Activated T-helper 1 cell treated with anti-CD3 and anti-CD28 coated beads, Interleukin-12 subunit alpha, Interleukin-12 subunit beta, Interleukin-2, Interleukin-4 antibody, amounts not matched to agents 30 ng/mL and 10 ng/mL and 1 ng/mL, durations not matched to agents 14 hours and 24 hours and 36 hours (primary cell): ENCODE measurements at regions of chr10 and their contacts with region 1.

Region 1: GRCh38 chr10:71396084-71396720 is 518 bp upstream of the CDH23 start:
- DNase-seq: no peak
- H3K4me3 Mint-ChIP-seq: peak overlapping the region; percentile 62
- H3K27ac Mint-ChIP-seq: no peak overlapping the region
- H3K4me1 Mint-ChIP-seq: no peaks in the 10 kb centered on the region
- H3K27me3 Mint-ChIP-seq: peaks cover 53% of the 10 kb centered on the region

Region 2: DNA sequence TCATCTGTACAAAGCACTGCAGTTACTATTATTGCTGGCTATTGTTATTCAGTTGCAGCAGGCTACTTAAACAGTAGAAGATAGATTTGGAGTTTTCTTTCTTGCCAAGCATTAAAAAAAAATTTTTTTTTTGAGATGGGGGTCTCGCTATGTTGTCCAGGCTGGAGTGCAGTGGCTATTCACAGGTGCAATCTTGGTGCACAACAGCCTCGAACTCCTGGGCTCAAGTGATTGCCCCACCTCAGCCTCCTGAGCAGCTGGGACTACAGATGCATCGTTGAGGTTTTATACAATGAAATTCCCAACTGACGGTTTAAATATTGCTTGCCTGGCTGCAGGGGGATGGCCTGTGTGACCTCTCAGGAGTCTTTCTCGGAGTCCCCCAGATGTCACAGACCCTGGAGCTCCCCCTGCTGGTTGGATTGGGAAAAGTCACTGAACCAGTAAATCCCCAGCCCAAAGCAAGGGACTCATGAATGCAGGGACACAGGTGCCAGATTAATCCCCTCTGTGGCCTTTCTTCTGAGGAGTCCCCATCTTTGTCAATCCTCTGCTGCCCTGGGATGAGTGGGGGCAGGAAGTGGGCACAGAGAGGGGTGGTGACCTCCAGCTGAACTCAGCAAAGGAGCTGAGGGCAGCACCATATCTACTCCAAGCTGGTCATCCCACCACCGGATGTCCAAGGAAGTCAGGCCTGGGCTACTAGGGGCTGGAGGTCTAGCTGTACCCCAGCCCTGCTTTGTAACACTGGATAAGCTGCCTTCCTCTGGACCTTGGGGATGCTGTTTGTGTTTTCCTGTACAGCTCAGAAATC is 173.8 kb after region 1 on chr10:
- intact Hi-C with region 1: loop called (anchors 5 kb)
- DNase-seq: peak; percentile 63
- H3K4me3 Mint-ChIP-seq: no peak overlapping the region
- H3K27ac Mint-ChIP-seq: peak overlapping the region; percentile 55
- H3K4me1 Mint-ChIP-seq: no peaks in the 10 kb centered on the region
- H3K27me3 Mint-ChIP-seq: no peaks in the 10 kb centered on the region

Region 3: DNA sequence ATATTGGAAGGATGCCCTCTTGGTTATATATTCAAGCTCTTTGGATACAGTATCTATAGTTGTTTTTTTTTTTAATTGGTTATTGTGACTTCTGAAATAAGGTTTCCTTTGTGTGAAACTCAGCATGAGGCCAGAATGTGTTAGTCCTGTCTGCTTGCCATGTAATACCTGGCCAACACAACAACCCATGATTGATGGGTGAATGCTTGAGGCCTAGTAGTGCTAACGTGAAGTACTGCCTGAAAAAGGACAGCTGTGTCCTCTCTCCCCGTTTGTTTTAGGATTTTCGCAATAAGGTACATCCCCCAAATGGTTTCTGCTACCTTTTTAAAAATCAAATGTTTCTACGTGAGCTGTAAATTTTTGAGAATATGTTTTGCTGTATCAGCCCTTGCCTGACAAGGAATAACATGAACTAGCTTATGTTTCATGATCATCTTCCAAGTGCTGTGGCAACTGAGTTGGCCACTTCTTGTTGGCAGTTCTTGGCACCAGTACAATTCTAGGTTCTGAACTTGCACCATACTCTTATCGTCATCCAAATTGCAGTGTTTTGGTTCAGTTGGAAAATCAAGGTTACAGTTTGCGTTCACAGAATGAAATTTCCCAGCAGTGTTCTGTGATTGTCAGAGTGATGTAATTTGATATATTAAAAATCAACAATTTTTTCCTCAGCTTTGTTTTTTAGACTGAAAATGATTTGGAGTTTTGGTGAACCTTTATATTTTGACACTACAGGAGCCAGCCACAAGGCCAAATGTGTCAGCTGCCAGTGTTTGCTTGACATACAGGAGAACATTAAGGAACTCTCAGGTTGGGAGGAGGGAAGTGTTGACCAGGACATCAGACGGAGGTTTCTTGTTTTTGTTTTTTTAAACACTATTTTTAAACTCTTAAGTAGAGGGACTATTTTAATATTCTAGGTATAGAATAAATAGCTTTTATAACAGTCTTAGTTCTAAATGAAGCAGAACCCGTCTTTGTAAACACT is 833.4 kb after region 1 on chr10:
- intact Hi-C with region 1: no loop called
- DNase-seq: no peak
- H3K4me3 Mint-ChIP-seq: no peak overlapping the region
- H3K27ac Mint-ChIP-seq: peak overlapping the region; percentile 58
- H3K4me1 Mint-ChIP-seq: peaks cover 34% of the 10 kb centered on the region
- H3K27me3 Mint-ChIP-seq: no peaks in the 10 kb centered on the region